Colonic mucosa (tissue), 4 donors: ENCODE measurements at regions of chrX and their contacts with region 1.

Region 1: DNA sequence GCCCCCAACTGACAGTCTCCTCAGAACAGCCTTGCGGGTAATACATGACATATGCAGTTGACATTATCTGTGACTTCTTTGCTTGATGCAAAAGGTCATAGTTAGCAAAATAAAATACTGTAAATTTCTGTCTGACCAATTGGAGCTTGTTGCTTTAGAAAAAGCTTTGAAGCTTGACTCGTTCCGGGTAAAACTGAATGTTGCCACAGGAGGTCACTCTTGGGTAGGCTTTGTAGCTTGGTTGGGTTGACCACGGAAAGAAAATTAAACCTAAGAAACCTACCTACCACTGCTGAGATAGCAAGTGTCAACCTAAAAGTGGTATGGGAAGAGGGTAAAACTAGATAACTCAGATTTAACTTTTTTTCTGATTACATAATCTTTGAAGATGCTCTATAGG is 23.2 kb downstream of the PRPS2 start:
- DNase-seq: peak; percentile 32
- H3K4me3 ChIP-seq: no peak overlapping the region
- H3K27ac ChIP-seq: no peak overlapping the region
- H3K4me1 ChIP-seq: no peaks in the 10 kb centered on the region
- H3K27me3 ChIP-seq: no peaks in the 10 kb centered on the region
- CTCF ChIP-seq: peak; percentile 34

Region 2: DNA sequence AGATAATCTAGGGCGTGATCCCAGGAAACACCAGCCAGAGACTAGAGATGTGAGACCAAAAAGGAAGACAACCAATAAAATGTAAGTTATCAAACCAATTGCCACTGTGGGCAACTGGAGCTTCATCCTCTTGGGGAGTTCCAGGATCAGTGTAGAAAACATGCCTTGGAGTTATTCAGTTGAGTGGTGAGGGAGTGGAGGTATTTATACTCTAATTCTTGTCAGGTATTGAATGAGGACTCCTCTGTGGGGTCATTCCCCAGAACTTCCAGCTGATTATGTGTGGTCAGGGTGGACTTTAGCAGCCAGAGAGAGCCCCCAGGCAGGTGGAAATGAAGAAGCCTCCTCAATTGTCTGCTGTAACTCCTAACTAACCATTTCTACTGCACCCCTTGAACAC is 167.2 kb before region 1 on chrX:
- intact Hi-C with region 1: no loop called
- DNase-seq: no peak
- H3K4me3 ChIP-seq: no peak overlapping the region
- H3K27ac ChIP-seq: no peak overlapping the region
- H3K4me1 ChIP-seq: no peaks in the 10 kb centered on the region
- H3K27me3 ChIP-seq: no peaks in the 10 kb centered on the region
- CTCF ChIP-seq: no peak

Region 3: DNA sequence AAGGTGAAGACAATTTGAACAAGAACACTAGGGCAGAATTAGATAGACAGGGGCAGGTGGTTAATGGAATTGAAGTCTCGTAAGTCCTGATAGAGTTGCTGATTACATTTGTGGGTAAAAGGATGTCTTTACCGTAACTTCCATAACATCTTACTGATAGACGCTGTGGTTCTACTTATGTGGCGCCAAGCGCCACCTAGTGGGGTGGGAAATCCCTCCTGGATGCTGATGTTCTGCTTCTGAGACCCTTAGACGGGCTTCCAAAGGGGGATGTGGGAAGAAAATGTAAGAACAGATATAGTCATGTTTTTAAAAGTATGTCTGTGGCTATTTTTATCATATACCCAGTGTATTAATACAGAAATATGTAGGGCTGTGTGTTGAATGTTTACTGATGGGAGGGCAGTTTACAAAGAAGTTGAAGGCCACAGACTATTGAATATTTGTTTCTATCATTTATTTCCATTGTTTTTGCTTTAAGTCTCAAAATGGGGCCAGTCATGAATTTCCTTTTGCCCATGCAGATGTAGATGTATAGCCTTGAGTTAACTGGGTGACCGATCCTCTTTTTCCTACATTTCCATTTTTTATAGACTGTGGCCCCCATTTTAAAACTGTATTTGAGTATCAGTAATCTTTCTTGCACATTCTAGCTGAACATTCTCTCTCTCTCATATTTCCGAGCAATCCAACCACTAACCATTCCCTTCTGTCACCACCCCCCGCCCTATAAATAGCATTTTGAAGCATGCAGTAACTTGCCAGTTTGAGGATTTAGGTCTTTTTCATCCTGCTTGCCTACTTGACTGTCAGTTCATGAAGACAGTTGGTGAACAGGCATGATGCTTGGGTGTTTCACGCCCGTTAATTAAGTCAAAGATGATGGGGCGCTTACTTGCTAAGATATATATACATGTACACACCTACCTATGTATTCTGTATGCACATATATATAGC is 79.9 kb after region 1 on chrX:
- intact Hi-C with region 1: loop called (anchors 5 kb)
- DNase-seq: peak; percentile 40
- H3K4me3 ChIP-seq: no peak overlapping the region
- H3K27ac ChIP-seq: no peak overlapping the region
- H3K4me1 ChIP-seq: no peaks in the 10 kb centered on the region
- H3K27me3 ChIP-seq: no peaks in the 10 kb centered on the region
- CTCF ChIP-seq: peak; percentile 67